PC-9 (cell line): ENCODE measurements at regions of chr16 and their contacts with region 1.

Region 1: DNA sequence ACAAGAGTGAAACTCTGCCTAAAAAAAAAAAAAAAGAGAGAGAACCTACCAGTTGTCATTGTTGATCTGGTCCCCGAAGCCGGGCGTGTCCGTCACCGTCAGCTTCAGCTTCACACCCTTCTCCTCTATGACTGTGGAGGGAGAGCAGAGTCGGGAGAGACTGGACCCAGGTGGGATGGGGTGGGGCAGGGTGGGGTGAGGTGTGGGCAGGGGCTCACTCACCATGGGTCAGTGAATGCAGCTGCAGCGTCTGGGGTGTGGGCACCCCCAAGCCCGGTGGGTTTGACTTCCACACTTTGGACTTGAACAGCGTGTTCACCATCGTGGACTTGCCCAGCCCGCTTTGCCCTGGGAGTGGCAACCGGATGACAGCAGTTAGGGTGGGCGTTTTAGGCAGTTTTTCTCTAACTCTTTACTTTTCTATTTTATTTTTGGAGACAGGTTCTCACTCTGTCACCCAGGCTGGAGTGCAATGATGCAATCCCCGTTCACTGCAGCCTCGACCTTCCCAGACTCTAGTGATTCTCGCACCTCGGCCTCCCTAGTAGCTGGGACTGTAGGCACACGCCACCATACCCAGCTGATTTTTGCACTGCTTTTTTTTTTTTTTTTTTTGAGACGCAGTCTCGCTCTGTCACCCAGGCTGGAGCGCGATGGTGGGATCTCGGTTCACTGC is 2.2 kb downstream of the SEPTIN12 start:
- DNase-seq: no peak
- H3K4me3 ChIP-seq: no peak overlapping the region
- H3K27ac ChIP-seq: no peak overlapping the region
- H3K4me1 ChIP-seq: peaks cover 32% of the 10 kb centered on the region
- H3K27me3 ChIP-seq: no peaks in the 10 kb centered on the region
- CTCF ChIP-seq: no peak

Region 2: GRCh38 chr16:4693296-4693955 is 92.5 kb before region 1 on chr16 and contains the start of gene NUDT16L1:
- CTCF ChIA-PET with region 1: no interaction called
- POLR2A ChIA-PET with region 1: interaction called, 14 read pairs
- intact Hi-C with region 1: no loop called
- DNase-seq: peak; percentile 84 to 99
- H3K4me3 ChIP-seq: peak within 1 kb of the TSS; percentile 90
- H3K27ac ChIP-seq: 0 out of 2 replicates have a peak within 1 kb of the TSS, but pooled peaks have one; percentile 16
- H3K4me1 ChIP-seq: peaks cover 10% of the 10 kb centered on the region; the same call in 1 of the 2 replicates
- H3K27me3 ChIP-seq: no peaks in the 10 kb centered on the region
- CTCF ChIP-seq: no peak; the same call in 1 of the 2 replicates
- total RNA-seq, gene NUDT16L1: 25.7 and 37.5 TPM in 2 replicates